ENCODE measurements at regions of chr2 and their contacts with region 1.

Region 1: GRCh38 chr2:178478439-178479274 is at the start of gene FKBP7:
- DNase-seq: peak; percentile 74
- H3K4me3 Mint-ChIP-seq: peak within 1 kb of the TSS; percentile 90
- H3K27ac Mint-ChIP-seq: peak within 1 kb of the TSS; percentile 92
- H3K4me1 Mint-ChIP-seq: peaks cover 36% of the 10 kb centered on the region
- H3K27me3 Mint-ChIP-seq: no peaks in the 10 kb centered on the region
- total RNA-seq, gene FKBP7: 3.2 and 6.6 TPM in 2 replicates

Region 2: DNA sequence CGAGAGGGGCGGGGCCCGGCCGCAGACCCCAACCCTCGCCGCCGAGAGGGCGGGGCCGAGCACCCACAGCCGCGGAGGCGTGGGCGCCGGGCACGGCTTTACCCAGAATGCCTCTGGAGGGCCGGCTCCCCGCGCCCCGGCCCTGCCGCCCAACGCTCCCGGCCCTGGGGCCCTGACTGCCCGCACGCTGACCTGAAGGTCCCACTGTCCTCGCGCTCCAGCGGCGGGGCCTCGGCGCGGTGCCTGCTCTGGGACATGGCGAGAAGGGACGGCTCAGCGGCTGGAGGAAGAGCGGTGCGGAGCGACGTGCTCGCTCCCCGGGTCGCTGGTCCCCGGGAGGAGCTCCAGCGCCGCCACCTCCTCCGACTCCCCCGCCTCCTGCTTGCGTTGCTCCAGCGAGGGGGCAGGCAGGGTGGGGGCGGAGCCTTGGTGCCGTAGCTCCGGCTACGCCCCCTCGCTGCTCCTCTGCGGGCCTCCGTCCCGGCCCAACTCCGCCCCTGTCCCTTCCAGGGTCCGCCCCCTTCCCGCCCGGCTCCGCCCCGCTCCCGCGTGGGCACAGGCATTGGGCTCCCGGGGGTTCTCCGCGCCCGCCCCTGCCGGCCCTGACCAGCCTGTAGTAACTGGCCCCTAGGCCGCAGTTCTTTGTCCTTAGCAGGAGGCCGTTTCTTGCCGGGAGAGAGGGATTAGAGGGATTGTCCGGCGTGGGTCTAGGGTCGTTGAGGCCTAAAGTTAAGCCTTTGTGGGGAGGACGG is 27.7 kb before region 1 on chr2 and contains the starts of genes PJVK and PRKRA:
- intact Hi-C with region 1: loop called (anchors 1 kb)
- DNase-seq: peak; percentile 94
- H3K4me3 Mint-ChIP-seq: peak within 1 kb of the TSS; percentile 92
- H3K27ac Mint-ChIP-seq: peak within 1 kb of the TSS; percentile 99
- H3K4me1 Mint-ChIP-seq: peaks cover 29% of the 10 kb centered on the region
- H3K27me3 Mint-ChIP-seq: peaks cover 6% of the 10 kb centered on the region
- total RNA-seq, gene PJVK: 1.7 and 2.0 TPM in 2 replicates
- total RNA-seq, gene PRKRA: 65.8 and 67.8 TPM in 2 replicates

Region 3: GRCh38 chr2:178498137-178498536 is 19.5 kb after region 1 on chr2:
- intact Hi-C with region 1: no loop called
- DNase-seq: no peak
- H3K4me3 Mint-ChIP-seq: no peak overlapping the region
- H3K27ac Mint-ChIP-seq: no peak overlapping the region
- H3K4me1 Mint-ChIP-seq: peaks cover 6% of the 10 kb centered on the region
- H3K27me3 Mint-ChIP-seq: no peaks in the 10 kb centered on the region

Region 4: GRCh38 chr2:178514664-178515063 is 36.0 kb after region 1 on chr2:
- intact Hi-C with region 1: loop called (anchors 1 kb)
- DNase-seq: no peak
- H3K4me3 Mint-ChIP-seq: peak overlapping the region; percentile 58
- H3K27ac Mint-ChIP-seq: peak overlapping the region; percentile 78
- H3K4me1 Mint-ChIP-seq: peaks cover 27% of the 10 kb centered on the region
- H3K27me3 Mint-ChIP-seq: no peaks in the 10 kb centered on the region

Region 5: DNA sequence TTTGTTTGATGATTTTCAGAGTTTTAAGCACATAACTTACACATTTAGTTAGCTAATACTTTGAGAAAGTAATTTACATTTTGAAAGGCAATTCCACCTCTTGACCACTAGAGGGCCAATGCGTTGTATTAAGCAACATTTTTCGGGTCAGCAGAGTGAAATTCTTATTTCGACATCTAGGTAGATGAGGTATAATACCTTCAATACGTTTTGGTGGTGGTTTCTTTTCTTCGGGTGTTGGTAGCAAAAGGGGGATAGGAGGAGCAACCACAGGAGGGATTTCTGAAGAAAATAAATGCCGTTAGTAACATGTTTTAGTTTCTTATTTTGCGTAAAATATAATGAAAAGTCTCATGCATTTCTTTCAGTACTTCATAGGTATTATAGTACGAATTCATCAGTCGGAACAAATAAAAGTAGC is 222.3 kb after region 1 on chr2:
- intact Hi-C with region 1: loop called (anchors 2 kb)
- DNase-seq: no peak
- H3K4me3 Mint-ChIP-seq: no peak overlapping the region
- H3K27ac Mint-ChIP-seq: no peak overlapping the region
- H3K4me1 Mint-ChIP-seq: peaks cover 1% of the 10 kb centered on the region
- H3K27me3 Mint-ChIP-seq: peaks cover 1% of the 10 kb centered on the region